Heart left ventricle (tissue), 16 donors: ENCODE measurements at regions of chr21 and their contacts with region 1.

Region 1: GRCh38 chr21:46035809-46036695 is 54.5 kb downstream of the COL6A1 start:
- DNase-seq: peak; percentile 79 to 87 (median 84)
- ATAC-seq: peak; percentile 66 to 81 (median 72)
- H3K4me3 ChIP-seq: no peak overlapping the region
- H3K27ac ChIP-seq: peak overlapping the region in 11 of 12 donors; percentile 56 to 87 (median 67)
- H3K4me1 ChIP-seq: peaks cover 0 to 33% (median 16%) of the 10 kb centered on the region in 12 donors
- H3K27me3 ChIP-seq: no peaks in the 10 kb centered on the region
- CTCF ChIP-seq: no peak
- POLR2A ChIP-seq: no peak

Region 2: DNA sequence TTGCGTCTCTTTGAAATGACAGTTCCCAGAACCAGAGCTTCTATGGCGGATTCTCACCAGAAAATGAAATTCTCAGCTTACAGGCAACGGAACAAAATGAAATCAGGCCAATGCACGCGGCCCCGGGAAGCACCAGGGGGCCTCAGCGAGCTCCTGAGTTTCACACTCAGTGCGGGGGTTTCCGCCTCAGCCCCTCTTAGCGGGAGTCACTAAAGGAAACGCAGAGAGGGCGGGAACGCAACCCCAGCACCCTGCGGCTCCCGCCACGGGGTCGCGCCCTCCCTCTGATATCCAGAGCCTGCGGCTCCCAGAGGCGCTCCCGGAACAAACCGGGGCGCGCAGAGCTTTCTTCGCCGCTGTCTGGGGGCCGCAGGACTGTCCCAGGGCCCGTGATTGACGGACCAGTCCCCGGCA is 62.4 kb before region 1 on chr21:
- intact Hi-C with region 1: no loop called
- DNase-seq: peak; percentile 87 to 92 (median 90)
- ATAC-seq: peak; percentile 39 to 48 (median 43)
- H3K4me3 ChIP-seq: peak overlapping the region; percentile 29 to 69 (median 60)
- H3K27ac ChIP-seq: peak overlapping the region; percentile 90 to 99 (median 98)
- H3K4me1 ChIP-seq: peaks cover 7 to 72% (median 50%) of the 10 kb centered on the region in 12 donors
- H3K27me3 ChIP-seq: peaks cover 0 to 43% (median 0%) of the 10 kb centered on the region in 9 donors
- CTCF ChIP-seq: peak; percentile 69 to 88 (median 78)
- POLR2A ChIP-seq: no peak

Region 3: DNA sequence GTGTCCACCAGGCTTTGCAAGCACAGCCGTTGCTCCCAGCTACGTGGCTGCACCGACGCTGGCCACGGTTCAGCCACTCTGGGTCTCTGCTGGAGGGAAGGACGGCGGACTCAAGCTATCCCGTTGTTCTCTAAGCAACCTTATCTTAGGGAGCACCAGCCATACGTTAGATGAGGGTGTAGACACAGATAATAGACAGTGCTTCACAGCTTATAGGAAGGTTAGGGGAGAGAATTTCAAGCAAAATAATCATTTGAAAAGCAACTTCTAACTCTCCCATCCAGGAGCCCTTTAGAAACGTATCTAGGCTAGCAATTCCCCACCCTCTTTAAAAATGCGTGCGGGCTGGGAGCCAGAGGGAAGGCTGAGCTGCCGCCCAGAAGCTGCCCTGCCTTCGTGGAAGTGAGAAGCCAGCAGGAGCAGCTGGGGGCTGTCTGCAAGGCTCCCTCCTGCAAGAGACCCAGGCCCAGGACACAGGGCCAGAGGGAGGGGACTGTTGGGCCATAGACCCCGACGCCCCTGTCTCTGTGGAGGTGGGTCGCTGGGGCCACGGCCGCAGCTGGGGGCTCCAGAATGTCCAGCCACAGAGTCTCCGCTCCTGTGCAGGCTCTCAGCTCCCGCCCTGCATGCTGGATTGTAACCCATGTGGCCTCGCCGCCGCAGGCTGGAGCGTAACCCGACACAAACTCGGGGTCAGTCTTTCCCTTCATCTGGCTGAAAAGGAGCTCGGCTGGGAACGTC is 30.7 kb after region 1 on chr21:
- intact Hi-C with region 1: loop called in 1 of 10 experiments (anchors 2 kb)
- DNase-seq: peak in 1 of 5 donors; percentile 72
- ATAC-seq: peak in 3 of 4 donors; percentile 35 to 62 (median 47)
- H3K4me3 ChIP-seq: peak overlapping the region in 2 of 12 donors; percentile 1 to 8
- H3K27ac ChIP-seq: peak overlapping the region; percentile 10 to 91 (median 72)
- H3K4me1 ChIP-seq: peaks cover 0 to 35% (median 28%) of the 10 kb centered on the region in 12 donors
- H3K27me3 ChIP-seq: peaks cover 0 to 7% (median 0%) of the 10 kb centered on the region in 9 donors
- CTCF ChIP-seq: no peak
- POLR2A ChIP-seq: no peak